ENCODE measurements at regions of chr12 and their contacts with region 1.

Region 1: DNA sequence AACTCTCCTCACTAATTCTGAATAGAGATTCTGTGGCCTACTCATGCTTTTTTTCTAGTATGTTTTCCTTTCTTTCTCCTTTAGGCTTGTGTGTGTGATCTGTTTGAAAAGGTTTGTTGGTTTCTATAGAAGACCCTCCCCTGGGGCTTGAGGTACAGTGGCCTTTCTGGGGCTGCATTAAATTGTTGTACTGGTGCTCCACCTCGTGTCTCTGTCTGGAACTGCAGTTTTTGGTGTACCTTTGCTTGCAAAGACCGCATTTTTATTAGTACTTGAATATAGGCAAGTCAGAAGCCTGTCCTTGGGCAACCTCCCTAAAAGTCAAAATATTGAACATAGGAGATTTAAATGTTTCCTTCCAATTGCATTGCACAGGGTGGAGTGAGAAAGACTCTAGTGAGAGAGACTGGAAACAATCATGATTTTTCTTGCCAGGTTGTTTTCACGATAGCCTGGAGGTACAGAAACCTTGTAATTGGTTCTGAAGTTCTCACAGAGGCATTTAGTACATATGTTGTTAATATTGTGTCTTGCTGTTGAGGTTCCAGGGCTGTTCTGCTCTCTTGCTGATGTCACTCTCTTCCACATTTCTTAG is 39.0 kb downstream of the SLCO1B1 start:
- DNase-seq: peak in 4 of 5 donors; percentile 2 to 16 (median 8)
- H3K4me3 ChIP-seq: no peak overlapping the region
- H3K4me3 Mint-ChIP-seq: no peak overlapping the region
- H3K27ac ChIP-seq: no peak overlapping the region
- H3K27ac Mint-ChIP-seq: no peak overlapping the region
- H3K4me1 ChIP-seq: no peaks in the 10 kb centered on the region
- H3K4me1 Mint-ChIP-seq: no peaks in the 10 kb centered on the region
- H3K27me3 ChIP-seq: no peaks in the 10 kb centered on the region
- H3K27me3 Mint-ChIP-seq: peaks cover 0 to 1% of the 10 kb centered on the region in 2 donors

Region 2: GRCh38 chr12:19757317-19757877 is 1412.6 kb before region 1 on chr12:
- CTCF ChIA-PET with region 1: no interaction called
- POLR2A ChIA-PET with region 1: no interaction called
- intact Hi-C with region 1: loop called (anchors 5 kb)
- DNase-seq: peak in 1 of 5 donors; percentile 9
- H3K4me3 ChIP-seq: no peak overlapping the region
- H3K4me3 Mint-ChIP-seq: no peak overlapping the region
- H3K27ac ChIP-seq: no peak overlapping the region
- H3K27ac Mint-ChIP-seq: no peak overlapping the region
- H3K4me1 ChIP-seq: no peaks in the 10 kb centered on the region
- H3K4me1 Mint-ChIP-seq: peaks cover 0 to 2% (median 0%) of the 10 kb centered on the region in 4 donors
- H3K27me3 ChIP-seq: no peaks in the 10 kb centered on the region
- H3K27me3 Mint-ChIP-seq: peaks cover 1 to 3% of the 10 kb centered on the region in 2 donors

Region 3: DNA sequence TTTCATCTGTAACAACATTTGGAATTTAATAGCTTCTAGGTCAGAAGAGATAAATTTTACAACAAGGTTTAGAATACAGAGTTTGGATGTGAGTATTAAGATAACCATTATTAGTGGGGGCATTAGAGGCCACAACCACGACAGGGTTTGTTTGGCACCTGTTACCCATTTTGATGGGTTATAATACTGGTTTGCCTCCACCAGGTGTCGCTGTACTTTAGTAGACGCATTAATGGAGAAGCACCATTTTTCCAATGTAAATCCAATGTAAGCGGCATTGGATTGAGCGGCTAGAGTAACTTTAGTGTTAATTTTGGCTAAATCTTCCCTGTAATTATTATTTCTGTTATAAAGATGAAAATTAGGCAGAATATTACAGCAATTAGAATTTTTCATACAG is 223.2 kb before region 1 on chr12:
- CTCF ChIA-PET with region 1: no interaction called
- POLR2A ChIA-PET with region 1: no interaction called
- intact Hi-C with region 1: loop called (anchors 5 kb)
- DNase-seq: no peak
- H3K4me3 ChIP-seq: no peak overlapping the region
- H3K4me3 Mint-ChIP-seq: no peak overlapping the region
- H3K27ac ChIP-seq: no peak overlapping the region
- H3K27ac Mint-ChIP-seq: no peak overlapping the region
- H3K4me1 ChIP-seq: no peaks in the 10 kb centered on the region
- H3K4me1 Mint-ChIP-seq: no peaks in the 10 kb centered on the region
- H3K27me3 ChIP-seq: no peaks in the 10 kb centered on the region
- H3K27me3 Mint-ChIP-seq: peaks cover 0 to 2% of the 10 kb centered on the region in 2 donors

Region 4: DNA sequence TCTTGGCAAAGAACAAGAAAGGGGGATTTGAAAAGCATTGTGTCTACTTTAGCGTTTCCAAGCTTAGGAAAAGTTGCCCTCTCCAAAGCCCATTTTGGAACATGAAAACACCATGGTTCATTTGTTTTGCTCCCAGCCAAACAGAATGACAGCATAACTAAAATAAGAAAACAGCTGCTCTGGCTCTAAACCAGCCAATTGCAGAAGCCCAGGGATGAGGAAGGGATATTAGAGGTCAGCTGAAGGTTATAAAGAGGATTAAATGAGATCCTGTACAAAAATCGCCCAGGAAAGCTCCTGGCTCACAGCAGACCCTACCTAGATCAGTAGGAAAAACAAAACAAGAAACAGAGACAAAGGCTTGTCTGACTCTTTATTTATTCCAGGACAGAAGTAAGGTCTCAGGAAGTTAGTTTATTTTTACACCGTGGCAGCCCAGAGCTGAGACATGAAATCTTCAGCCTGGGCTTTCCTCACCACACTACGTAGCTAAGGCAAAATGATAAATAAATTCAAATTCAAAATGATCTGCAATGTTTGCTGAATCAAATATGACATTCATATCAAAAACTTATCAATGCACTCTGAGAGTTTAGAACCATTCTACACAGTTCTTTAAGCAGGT is 382.0 kb after region 1 on chr12:
- CTCF ChIA-PET with region 1: no interaction called
- POLR2A ChIA-PET with region 1: no interaction called
- intact Hi-C with region 1: no loop called
- DNase-seq: no peak
- H3K4me3 ChIP-seq: no peak overlapping the region
- H3K4me3 Mint-ChIP-seq: no peak overlapping the region
- H3K27ac ChIP-seq: no peak overlapping the region
- H3K27ac Mint-ChIP-seq: no peak overlapping the region
- H3K4me1 ChIP-seq: no peaks in the 10 kb centered on the region
- H3K4me1 Mint-ChIP-seq: no peaks in the 10 kb centered on the region
- H3K27me3 ChIP-seq: no peaks in the 10 kb centered on the region
- H3K27me3 Mint-ChIP-seq: no peaks in the 10 kb centered on the region

Region 5: GRCh38 chr12:22598141-22598762 is 1428.3 kb after region 1 on chr12:
- CTCF ChIA-PET with region 1: no interaction called
- POLR2A ChIA-PET with region 1: no interaction called
- intact Hi-C with region 1: no loop called
- DNase-seq: no peak
- H3K4me3 ChIP-seq: no peak overlapping the region
- H3K4me3 Mint-ChIP-seq: no peak overlapping the region
- H3K27ac ChIP-seq: no peak overlapping the region
- H3K27ac Mint-ChIP-seq: no peak overlapping the region
- H3K4me1 ChIP-seq: peaks cover 16% of the 10 kb centered on the region
- H3K4me1 Mint-ChIP-seq: peaks cover 4 to 9% (median 8%) of the 10 kb centered on the region in 4 donors
- H3K27me3 ChIP-seq: no peaks in the 10 kb centered on the region
- H3K27me3 Mint-ChIP-seq: peaks cover 1 to 3% of the 10 kb centered on the region in 2 donors